Activated CD4-positive, alpha-beta T cell treated with anti-CD3 and anti-CD28 coated beads for 36 hours (primary cell): ENCODE measurements at regions of chr5 and their contacts with region 1.

Region 1: DNA sequence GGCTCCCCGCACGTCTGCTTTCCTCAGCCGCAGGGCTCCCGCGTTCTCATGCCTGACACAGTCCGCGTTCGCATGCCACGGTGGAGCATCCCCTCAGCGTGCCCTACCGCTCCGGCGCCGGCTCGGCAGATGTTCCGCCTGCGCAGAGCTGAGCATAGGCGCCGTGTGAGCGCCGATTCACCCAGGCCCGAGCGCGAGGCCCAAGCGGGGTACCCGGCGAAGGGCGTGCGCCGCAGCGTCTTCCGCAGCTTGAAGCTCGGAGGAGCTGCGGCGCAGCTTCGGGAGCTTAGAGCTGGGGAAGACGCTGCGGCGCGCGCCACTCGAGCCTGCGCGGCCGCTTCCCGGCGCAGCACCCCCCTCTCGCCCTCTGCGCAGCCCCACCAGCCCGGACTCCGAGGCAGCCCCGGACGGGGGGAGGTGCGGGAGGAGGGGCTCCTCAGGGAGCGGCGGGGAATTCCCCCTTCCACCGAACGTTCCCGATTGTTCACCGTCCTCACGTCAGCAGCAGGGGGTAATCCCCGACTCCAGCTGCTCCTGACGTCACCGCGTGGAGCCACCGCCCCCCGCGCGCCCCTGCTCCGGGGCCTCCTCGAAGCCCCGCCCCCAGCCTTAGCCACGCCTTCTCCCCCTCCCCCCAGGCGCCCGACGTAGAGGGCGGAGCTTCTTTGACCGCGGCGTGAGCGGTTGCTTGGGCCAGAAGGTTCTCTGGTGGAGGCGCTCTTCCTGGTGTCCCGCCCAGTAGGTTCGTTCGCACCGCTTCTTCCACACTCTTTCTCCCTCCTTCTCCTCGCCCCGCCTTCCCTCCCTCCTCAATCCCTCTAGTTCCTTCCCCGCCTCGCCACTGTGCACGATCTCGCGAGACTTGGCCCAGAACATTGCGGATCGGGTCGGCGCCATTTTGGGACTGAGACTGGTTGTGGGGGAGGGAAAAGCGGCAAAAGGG is at the start of gene GPBP1:
- DNase-seq: peak; percentile 99
- ATAC-seq: peak; percentile 78
- H3K4me3 Mint-ChIP-seq: peak within 1 kb of the TSS; percentile 83
- H3K27ac Mint-ChIP-seq: peak within 1 kb of the TSS; percentile 93
- H3K4me1 Mint-ChIP-seq: peaks cover 21% of the 10 kb centered on the region
- H3K27me3 Mint-ChIP-seq: no peaks in the 10 kb centered on the region
- total RNA-seq, gene GPBP1: 91.8 to 116 TPM

Region 2: GRCh38 chr5:55711968-55712859 is 1461.2 kb before region 1 on chr5 and contains the start of gene SLC38A9:
- CTCF ChIA-PET with region 1: no interaction called
- POLR2A ChIA-PET with region 1: no interaction called
- intact Hi-C with region 1: loop called in 1 of 2 experiments (anchors 1 kb)
- DNase-seq: peak; percentile 97
- ATAC-seq: peak; percentile 100
- H3K4me3 Mint-ChIP-seq: peak within 1 kb of the TSS; percentile 93
- H3K27ac Mint-ChIP-seq: peak within 1 kb of the TSS; percentile 92
- H3K4me1 Mint-ChIP-seq: peaks cover 24% of the 10 kb centered on the region
- H3K27me3 Mint-ChIP-seq: no peaks in the 10 kb centered on the region
- total RNA-seq, gene SLC38A9: 12.9 to 16.2 TPM

Region 3: DNA sequence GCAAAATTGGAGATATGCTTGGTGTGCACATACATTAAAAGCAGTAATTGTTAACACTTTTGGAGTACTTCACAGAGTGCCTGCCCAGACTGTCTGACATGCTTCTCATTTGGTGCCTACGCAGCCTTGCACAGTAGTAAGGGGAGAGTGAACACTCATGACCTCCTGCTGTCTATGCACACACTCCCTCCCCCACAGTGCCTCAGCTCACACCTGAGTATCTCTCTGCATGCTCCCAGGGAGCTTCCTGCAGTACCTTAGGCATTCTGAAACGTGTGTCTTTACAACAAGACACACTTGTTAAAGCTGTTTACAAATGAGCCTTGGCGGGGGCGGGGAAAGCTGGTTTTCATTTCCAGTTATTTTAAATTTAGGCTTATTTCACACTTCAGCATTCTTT is 340.1 kb before region 1 on chr5:
- CTCF ChIA-PET with region 1: no interaction called
- POLR2A ChIA-PET with region 1: no interaction called
- intact Hi-C with region 1: loop called in 1 of 2 experiments (anchors 5 kb)
- DNase-seq: peak; percentile 69
- ATAC-seq: peak; percentile 77
- H3K4me3 Mint-ChIP-seq: no peak overlapping the region
- H3K27ac Mint-ChIP-seq: peak overlapping the region; percentile 72
- H3K4me1 Mint-ChIP-seq: peaks cover 93% of the 10 kb centered on the region
- H3K27me3 Mint-ChIP-seq: no peaks in the 10 kb centered on the region

Region 4: DNA sequence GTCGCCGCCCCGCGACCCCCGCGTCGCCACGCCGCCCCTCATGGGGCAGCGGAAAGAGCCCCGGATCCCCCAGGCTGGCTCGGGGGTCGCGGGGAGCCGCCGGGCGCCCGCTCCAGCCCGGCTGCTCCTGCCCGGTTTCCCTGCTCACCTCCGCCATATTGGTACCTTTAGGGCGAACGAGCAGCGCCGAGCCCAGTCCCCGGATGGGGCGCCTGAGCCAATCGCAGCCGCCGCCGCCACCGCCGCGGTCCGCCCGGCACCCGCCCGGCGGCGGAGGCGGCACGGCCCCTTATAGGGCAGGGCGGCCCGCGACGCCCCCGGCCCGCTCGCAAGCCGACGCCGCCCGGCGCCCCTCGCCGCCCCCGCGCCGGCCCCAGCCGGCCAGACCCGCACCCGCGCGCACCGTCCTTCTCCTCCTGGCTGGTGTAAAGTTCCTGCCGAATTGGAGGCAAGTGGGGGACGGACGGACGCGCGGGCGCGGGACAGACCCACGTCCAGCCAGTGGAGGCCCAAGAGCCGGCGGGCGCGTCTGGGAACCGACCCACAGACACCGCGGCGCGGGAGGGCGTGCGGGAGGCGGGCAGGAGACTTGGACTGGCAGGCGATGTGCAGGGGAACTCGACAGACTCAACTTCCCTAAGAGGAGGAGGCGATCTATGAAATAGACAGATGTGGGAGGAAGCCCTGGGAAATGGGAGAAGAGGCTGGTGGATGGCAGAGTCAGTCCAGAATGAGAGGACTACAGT is 221.3 kb before region 1 on chr5 and contains the start of gene MIER3:
- CTCF ChIA-PET with region 1: interaction called, 3 read pairs
- POLR2A ChIA-PET with region 1: interaction called, 4 read pairs
- intact Hi-C with region 1: loop called (anchors 1 to 2 kb)
- DNase-seq: peak; percentile 90
- ATAC-seq: peak; percentile 95
- H3K4me3 Mint-ChIP-seq: peak within 1 kb of the TSS; percentile 85
- H3K27ac Mint-ChIP-seq: peak within 1 kb of the TSS; percentile 81
- H3K4me1 Mint-ChIP-seq: peaks cover 20% of the 10 kb centered on the region
- H3K27me3 Mint-ChIP-seq: peaks cover 16% of the 10 kb centered on the region
- total RNA-seq, gene MIER3: 15.4 to 16.0 TPM

Region 5: DNA sequence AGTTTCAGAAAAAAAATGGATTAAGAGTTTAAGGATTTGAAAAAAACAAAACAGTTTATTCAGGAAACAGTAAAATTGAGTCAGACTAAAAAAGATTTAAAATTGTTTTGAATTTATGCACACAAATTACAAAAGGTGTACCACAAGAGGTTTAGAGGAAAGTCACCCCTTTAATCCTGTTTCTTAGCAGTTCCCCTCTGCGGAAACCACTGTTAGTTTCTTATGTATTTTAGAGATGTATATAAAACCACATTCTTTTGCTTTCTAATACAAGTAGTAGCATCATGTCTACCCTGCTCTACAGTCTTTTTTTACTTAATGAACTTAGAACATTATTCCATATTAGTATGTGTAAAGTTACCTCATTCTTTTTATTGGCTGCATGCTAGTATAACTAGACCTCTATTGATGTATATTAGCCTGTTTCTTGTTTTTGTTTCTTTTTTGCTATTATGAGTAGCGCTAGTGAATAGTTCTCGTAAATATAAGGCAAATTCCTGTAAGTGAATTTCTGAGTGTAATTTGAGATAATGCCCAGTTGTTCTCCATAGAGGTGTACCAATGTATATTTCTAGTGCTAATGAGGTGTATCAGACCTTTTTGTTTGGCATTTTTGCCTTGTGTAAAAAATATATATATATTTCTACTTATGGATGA is 20.4 kb after region 1 on chr5:
- CTCF ChIA-PET with region 1: interaction called, 6 read pairs
- POLR2A ChIA-PET with region 1: no interaction called
- intact Hi-C with region 1: loop called (anchors 1 to 2 kb)
- DNase-seq: no peak
- ATAC-seq: peak; percentile 87
- H3K4me3 Mint-ChIP-seq: no peak overlapping the region
- H3K27ac Mint-ChIP-seq: peak overlapping the region; percentile 76
- H3K4me1 Mint-ChIP-seq: peaks cover 78% of the 10 kb centered on the region
- H3K27me3 Mint-ChIP-seq: no peaks in the 10 kb centered on the region

Region 6: GRCh38 chr5:57311921-57312735 is 138.7 kb after region 1 on chr5:
- CTCF ChIA-PET with region 1: no interaction called
- POLR2A ChIA-PET with region 1: no interaction called
- intact Hi-C with region 1: no loop called
- DNase-seq: no peak
- ATAC-seq: no peak
- H3K4me3 Mint-ChIP-seq: no peak overlapping the region
- H3K27ac Mint-ChIP-seq: no peak overlapping the region
- H3K4me1 Mint-ChIP-seq: no peaks in the 10 kb centered on the region
- H3K27me3 Mint-ChIP-seq: peaks cover 3% of the 10 kb centered on the region

Region 7: DNA sequence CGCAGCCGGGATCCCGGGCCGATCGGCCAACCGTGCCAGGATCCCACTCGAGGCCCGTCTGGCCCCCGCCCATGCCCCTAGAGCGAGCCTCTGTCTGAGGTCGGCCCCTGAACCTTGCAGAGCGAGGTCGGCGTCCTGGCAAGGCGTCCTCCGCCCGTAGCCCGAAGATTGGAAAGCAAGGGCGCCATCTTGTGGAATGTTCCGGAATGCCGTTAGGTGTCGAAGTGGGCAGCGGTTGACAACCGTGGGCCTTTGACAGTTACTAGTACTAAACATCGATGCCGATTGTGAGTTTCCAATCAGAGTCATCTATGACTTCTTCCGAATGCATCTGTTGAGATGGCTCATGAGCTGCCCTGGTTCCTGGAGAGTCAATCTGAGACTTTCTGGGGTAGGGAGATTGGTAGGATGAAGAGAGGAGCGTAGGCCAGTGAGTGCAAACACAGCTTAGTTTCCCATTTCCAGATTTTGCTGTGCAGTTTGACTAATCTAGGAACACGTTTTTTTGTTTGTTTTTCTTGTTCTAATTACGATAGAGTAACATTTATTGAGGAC is 1287.4 kb after region 1 on chr5:
- CTCF ChIA-PET with region 1: no interaction called
- POLR2A ChIA-PET with region 1: no interaction called
- intact Hi-C with region 1: loop called (anchors 1 to 5 kb)
- DNase-seq: peak; percentile 93
- ATAC-seq: peak; percentile 81
- H3K4me3 Mint-ChIP-seq: peak overlapping the region; percentile 69
- H3K27ac Mint-ChIP-seq: peak overlapping the region; percentile 11
- H3K4me1 Mint-ChIP-seq: peaks cover 8% of the 10 kb centered on the region
- H3K27me3 Mint-ChIP-seq: peaks cover 11% of the 10 kb centered on the region

Region 8: DNA sequence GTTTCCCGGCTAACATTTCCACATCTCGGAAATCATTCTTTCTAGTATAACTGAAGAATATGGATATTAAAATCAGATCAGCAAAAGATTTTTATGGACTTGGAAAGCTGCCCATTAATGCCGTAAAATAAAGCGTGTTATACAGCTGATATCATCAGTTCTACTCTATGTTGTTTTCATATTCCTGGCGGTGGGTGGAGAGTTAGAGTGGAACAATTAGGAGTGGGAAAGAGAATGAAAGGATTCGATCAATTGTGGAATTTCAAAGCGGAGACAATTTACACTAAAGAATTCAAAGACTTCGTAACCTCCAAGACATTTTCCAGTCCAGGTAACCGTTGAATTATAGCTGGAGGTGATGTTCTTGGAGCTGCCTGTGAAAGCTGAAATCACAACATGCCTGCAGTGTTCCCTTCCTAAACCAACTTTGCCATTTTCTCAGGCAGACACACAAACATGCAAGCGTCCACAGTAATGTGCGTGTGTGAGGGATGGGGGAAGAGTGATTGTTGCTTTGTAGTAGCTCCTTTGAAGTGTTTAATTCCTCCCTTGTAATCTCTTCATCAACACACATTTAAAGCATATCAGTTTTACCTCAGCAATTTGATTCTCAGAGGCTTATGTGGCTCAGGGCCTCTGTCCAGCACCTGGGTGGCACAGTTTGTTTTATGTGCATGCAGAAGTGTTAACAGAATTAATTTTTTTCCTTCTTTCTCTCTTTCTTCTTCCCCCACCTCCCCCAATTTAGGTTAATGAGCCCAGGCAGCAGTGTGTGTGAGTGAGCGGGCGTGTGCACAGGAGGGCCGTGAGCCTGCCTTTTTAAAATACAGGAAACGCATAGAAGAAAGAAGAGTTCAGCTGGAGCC is 1953.5 kb after region 1 on chr5:
- CTCF ChIA-PET with region 1: no interaction called
- POLR2A ChIA-PET with region 1: no interaction called
- intact Hi-C with region 1: loop called in 1 of 2 experiments (anchors 5 kb)
- DNase-seq: no peak
- ATAC-seq: peak; percentile 7
- H3K4me3 Mint-ChIP-seq: no peak overlapping the region
- H3K27ac Mint-ChIP-seq: no peak overlapping the region
- H3K4me1 Mint-ChIP-seq: peaks cover 23% of the 10 kb centered on the region
- H3K27me3 Mint-ChIP-seq: no peaks in the 10 kb centered on the region